AG04450 (cell line): ENCODE measurements at regions of chr12 and their contacts with region 1.

Region 1: DNA sequence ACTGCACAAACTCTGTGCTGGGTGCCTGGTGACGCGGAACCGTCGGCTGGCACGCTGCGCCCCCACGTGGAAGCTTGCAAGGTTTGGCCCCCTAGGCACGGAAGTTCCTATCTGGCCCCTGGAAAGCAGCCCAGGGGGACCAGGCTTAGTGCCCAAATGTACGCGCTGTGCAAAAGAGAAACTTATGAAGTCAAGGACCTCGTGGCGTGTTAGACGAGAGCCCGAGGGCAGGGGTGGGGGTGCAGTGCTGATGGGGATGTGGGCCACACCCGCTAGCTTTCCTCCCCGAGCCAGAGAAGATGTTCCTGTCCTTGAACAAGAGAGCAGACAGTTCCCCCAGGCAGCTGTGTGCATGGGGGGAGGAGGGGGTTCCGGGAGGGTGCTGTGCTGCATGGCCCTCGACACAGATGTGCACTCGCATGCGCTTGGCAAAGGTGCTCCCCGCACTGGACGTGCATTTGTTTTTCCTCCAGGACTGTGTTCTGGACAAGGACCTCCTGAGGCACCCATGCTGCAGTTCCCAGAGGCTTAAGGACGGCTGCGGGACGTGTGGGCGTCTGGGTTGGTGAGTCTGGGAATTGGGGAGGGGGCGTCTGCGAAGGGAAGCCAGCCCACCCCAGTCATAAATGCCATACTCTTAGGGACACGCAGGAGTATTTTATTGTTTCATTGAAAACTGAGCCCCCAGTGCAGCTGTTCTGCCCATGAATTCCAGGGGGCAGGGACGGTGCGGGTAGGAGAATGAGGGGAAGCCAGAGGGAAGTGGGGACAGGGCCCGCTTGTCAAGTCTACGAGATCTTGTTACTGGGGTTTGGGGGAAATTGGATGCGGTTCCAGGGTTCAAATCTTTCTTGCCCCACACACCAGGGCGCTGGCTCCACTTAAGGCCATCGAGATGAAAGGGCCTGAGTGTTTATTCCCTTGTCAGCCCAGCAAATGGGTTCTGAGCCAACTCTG is 80.0 kb downstream of the NTF3 start:
- DNase-seq: peak; percentile 23
- H3K4me3 ChIP-seq: 0 out of 2 replicates have a peak overlapping the region, but pooled peaks have one; percentile 10
- H3K27ac ChIP-seq: no peak overlapping the region
- H3K27me3 ChIP-seq: no peaks in the 10 kb centered on the region
- CTCF ChIP-seq: peak; percentile 78

Region 2: GRCh38 chr12:5442251-5443006 is 69.5 kb before region 1 on chr12:
- CTCF ChIA-PET with region 1: interaction called, 10 read pairs
- POLR2A ChIA-PET with region 1: no interaction called
- DNase-seq: no peak
- H3K4me3 ChIP-seq: no peak overlapping the region
- H3K27ac ChIP-seq: no peak overlapping the region
- H3K27me3 ChIP-seq: no peaks in the 10 kb centered on the region
- CTCF ChIP-seq: peak; percentile 57

Region 3: GRCh38 chr12:5588176-5588575 is 76.3 kb after region 1 on chr12:
- CTCF ChIA-PET with region 1: no interaction called
- POLR2A ChIA-PET with region 1: no interaction called
- DNase-seq: no peak
- H3K4me3 ChIP-seq: no peak overlapping the region
- H3K27ac ChIP-seq: no peak overlapping the region
- H3K27me3 ChIP-seq: peaks cover 9% of the 10 kb centered on the region
- CTCF ChIP-seq: no peak